CD8-positive, alpha-beta memory T cell (primary cell): ENCODE measurements at regions of chr22 and their contacts with region 1.

Region 1: GRCh38 chr22:22587577-22588188 is 28.6 kb upstream of the PRAME start:
- DNase-seq: no peak
- H3K4me3 ChIP-seq: no peak overlapping the region
- H3K4me3 Mint-ChIP-seq: no peak overlapping the region
- H3K27ac ChIP-seq: no peak overlapping the region
- H3K27ac Mint-ChIP-seq: no peak overlapping the region
- H3K4me1 ChIP-seq: no peaks in the 10 kb centered on the region
- H3K4me1 Mint-ChIP-seq: peaks cover 0 to 4% (median 0%) of the 10 kb centered on the region in 3 donors
- H3K27me3 ChIP-seq: peaks cover 3% of the 10 kb centered on the region
- H3K27me3 Mint-ChIP-seq: peaks cover 22 to 37% of the 10 kb centered on the region in 2 donors

Region 2: DNA sequence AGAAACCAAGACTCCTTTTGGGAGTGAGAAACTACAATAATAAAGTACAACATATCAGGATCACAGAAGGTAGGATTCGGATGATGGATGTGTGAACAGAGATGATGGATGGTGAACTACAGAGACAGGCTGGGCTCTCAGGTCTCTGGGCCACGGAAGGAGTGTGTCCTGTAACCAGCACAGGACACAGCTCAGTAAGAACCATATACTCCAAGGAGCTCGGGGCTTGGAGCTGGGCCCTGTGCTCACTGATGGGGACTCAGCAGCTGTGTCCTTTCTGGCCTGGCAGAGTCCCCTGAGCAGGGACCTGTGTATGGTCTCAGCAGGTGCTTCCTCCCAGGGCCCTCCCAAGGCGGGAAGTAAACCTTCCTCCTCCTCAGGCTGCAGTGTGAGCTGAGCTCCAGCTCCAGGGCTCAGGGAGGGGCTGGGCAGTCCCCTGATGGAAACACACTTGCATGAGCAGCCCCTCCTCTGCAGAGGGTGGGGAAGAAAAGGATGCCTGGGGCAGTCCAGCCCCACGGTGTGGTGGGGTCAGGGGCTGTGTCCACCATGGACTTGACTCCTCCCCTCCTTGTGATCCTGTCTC is 565.3 kb before region 1 on chr22:
- CTCF ChIA-PET with region 1: no interaction called
- POLR2A ChIA-PET with region 1: no interaction called
- DNase-seq: no peak
- H3K4me3 ChIP-seq: no peak overlapping the region
- H3K4me3 Mint-ChIP-seq: no peak overlapping the region
- H3K27ac ChIP-seq: no peak overlapping the region
- H3K27ac Mint-ChIP-seq: peak overlapping the region in 1 of 8 donors; percentile 38
- H3K4me1 ChIP-seq: no peaks in the 10 kb centered on the region
- H3K4me1 Mint-ChIP-seq: no peaks in the 10 kb centered on the region
- H3K27me3 ChIP-seq: no peaks in the 10 kb centered on the region
- H3K27me3 Mint-ChIP-seq: peaks cover 1 to 8% of the 10 kb centered on the region in 2 donors

Region 3: GRCh38 chr22:22576244-22576988 is 11.3 kb before region 1 on chr22:
- CTCF ChIA-PET with region 1: interaction called, 22 read pairs
- POLR2A ChIA-PET with region 1: no interaction called
- DNase-seq: no peak
- H3K4me3 ChIP-seq: no peak overlapping the region
- H3K4me3 Mint-ChIP-seq: peak overlapping the region in 1 of 7 donors; percentile 54
- H3K27ac ChIP-seq: no peak overlapping the region
- H3K27ac Mint-ChIP-seq: no peak overlapping the region
- H3K4me1 ChIP-seq: no peaks in the 10 kb centered on the region
- H3K4me1 Mint-ChIP-seq: no peaks in the 10 kb centered on the region
- H3K27me3 ChIP-seq: no peaks in the 10 kb centered on the region
- H3K27me3 Mint-ChIP-seq: peaks cover 9 to 27% of the 10 kb centered on the region in 2 donors

Region 4: GRCh38 chr22:22598144-22598543 is 10.5 kb after region 1 on chr22:
- CTCF ChIA-PET with region 1: interaction called, 16 read pairs
- POLR2A ChIA-PET with region 1: no interaction called
- DNase-seq: no peak
- H3K4me3 ChIP-seq: no peak overlapping the region
- H3K4me3 Mint-ChIP-seq: no peak overlapping the region
- H3K27ac ChIP-seq: no peak overlapping the region
- H3K27ac Mint-ChIP-seq: peak overlapping the region in 1 of 8 donors; percentile 51
- H3K4me1 ChIP-seq: no peaks in the 10 kb centered on the region
- H3K4me1 Mint-ChIP-seq: peaks cover 0 to 6% (median 0%) of the 10 kb centered on the region in 3 donors
- H3K27me3 ChIP-seq: no peaks in the 10 kb centered on the region
- H3K27me3 Mint-ChIP-seq: peaks cover 6 to 13% of the 10 kb centered on the region in 2 donors